ENCODE measurements at regions of chr7 and their contacts with region 1.

Region 1: GRCh38 chr7:50359995-50360925 is 55.7 kb downstream of the IKZF1 start:
- DNase-seq: peak; percentile 90
- H3K4me3 Mint-ChIP-seq: peak overlapping the region; percentile 61
- H3K27ac Mint-ChIP-seq: peak overlapping the region; percentile 97
- H3K4me1 Mint-ChIP-seq: peaks cover 98% of the 10 kb centered on the region
- H3K27me3 Mint-ChIP-seq: no peaks in the 10 kb centered on the region

Region 2: GRCh38 chr7:50310361-50310760 is 49.9 kb before region 1 on chr7:
- CTCF ChIA-PET with region 1: interaction called, 6 read pairs
- POLR2A ChIA-PET with region 1: interaction called, 40 read pairs
- intact Hi-C with region 1: no loop called
- DNase-seq: no peak
- H3K4me3 Mint-ChIP-seq: peak overlapping the region; percentile 86
- H3K27ac Mint-ChIP-seq: peak overlapping the region; percentile 94
- H3K4me1 Mint-ChIP-seq: peaks cover 47% of the 10 kb centered on the region
- H3K27me3 Mint-ChIP-seq: no peaks in the 10 kb centered on the region

Region 3: GRCh38 chr7:50641442-50642405 is 281.5 kb after region 1 on chr7:
- CTCF ChIA-PET with region 1: no interaction called
- POLR2A ChIA-PET with region 1: no interaction called
- intact Hi-C with region 1: no loop called
- DNase-seq: no peak
- H3K4me3 Mint-ChIP-seq: no peak overlapping the region
- H3K27ac Mint-ChIP-seq: no peak overlapping the region
- H3K4me1 Mint-ChIP-seq: peaks cover 6% of the 10 kb centered on the region
- H3K27me3 Mint-ChIP-seq: no peaks in the 10 kb centered on the region

Region 4: DNA sequence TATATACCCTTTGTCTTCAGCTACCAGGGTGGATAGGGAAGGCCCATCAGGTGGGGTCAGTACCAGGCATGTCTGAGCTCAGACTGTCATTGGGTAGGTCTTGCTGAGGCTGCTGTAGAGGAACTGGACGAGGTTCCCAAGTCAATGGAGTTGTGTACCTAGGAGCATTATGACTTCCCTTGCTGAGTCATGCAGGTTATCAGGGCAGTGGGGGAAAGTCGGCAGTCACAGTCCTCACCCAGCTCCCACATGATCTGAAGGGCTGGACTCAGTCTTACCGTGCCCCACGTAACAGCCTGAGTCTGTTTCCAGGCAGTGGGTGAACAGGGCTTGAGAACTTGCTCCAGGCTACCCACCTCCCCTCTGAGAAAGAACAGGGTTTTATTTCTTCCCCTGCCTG is 1217.1 kb after region 1 on chr7:
- CTCF ChIA-PET with region 1: no interaction called
- POLR2A ChIA-PET with region 1: no interaction called
- intact Hi-C with region 1: no loop called
- DNase-seq: no peak
- H3K4me3 Mint-ChIP-seq: no peak overlapping the region
- H3K27ac Mint-ChIP-seq: no peak overlapping the region
- H3K4me1 Mint-ChIP-seq: no peaks in the 10 kb centered on the region
- H3K27me3 Mint-ChIP-seq: no peaks in the 10 kb centered on the region

Measured in activated CD4-positive, alpha-beta memory T cell treated with anti-CD3 and anti-CD28 coated beads for 36 hours (primary cell).